ENCODE measurements at regions of chr11 and their contacts with region 1.

Region 1: GRCh38 chr11:85941380-85941973 is 86.3 kb downstream of the CCDC83 start:
- DNase-seq: no peak
- ATAC-seq: peak; percentile 79
- H3K4me3 ChIP-seq: no peak overlapping the region
- H3K27ac ChIP-seq: no peak overlapping the region
- H3K4me1 ChIP-seq: no peaks in the 10 kb centered on the region
- H3K27me3 ChIP-seq: no peaks in the 10 kb centered on the region
- CTCF ChIP-seq: peak; percentile 73

Region 2: GRCh38 chr11:85810871-85811611 is 130.4 kb before region 1 on chr11 and contains the start of gene SYTL2:
- CTCF ChIA-PET with region 1: no interaction called
- POLR2A ChIA-PET with region 1: no interaction called
- in situ Hi-C with region 1: no loop called
- intact Hi-C with region 1: no loop called
- DNase-seq: no peak
- ATAC-seq: peak; percentile 96
- H3K4me3 ChIP-seq: peak within 1 kb of the TSS; percentile 67 to 68
- H3K27ac ChIP-seq: peak within 1 kb of the TSS; percentile 87
- H3K4me1 ChIP-seq: peaks cover 37% of the 10 kb centered on the region
- H3K27me3 ChIP-seq: no peaks in the 10 kb centered on the region
- CTCF ChIP-seq: peak; percentile 39; the same call in 1 of the 2 replicates
- total RNA-seq, gene SYTL2: 132 TPM

Region 3: DNA sequence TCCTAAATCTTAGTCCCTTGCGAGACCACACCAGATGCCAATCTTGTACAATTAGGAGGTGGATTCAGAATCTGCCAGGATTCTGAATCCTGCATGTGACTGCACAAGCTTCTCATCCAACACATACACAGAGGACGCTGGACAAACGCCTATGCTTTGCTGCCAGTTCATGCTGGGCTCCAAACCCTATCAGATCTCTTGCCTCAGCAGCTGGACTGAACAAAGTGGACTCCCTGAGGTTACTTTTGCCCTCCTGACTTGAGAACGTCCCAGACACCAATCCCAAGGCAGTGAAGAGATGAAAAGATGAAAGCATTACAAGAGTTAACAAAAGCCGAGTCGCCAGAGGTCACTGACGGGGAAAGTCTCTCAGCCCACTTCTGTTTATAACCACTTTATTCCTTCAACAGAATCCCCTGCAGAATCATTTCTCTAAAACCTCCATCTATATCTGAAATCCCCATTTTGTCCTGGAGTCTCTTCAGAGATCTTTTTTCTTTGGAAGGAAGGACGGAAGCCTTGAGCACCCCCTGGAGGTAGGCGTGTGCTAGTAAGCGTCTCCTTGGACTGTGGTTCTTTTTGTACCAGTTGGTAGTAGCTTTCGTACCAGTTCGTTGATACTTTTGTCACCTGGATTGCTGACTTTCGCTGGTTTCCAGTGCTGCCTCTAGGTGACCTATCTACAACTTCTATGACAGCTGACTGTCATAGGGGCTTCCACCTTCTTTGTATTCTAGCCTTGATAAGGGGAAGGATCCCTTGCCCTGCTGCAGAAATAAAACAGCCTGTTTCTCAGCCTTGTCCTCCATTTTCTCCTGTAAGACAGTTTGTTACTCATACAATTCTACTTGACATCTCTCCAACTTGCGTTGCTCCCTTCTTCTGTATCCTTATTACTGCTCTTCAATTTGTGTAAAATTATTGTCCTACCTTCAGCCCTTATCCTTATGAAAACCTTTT is 276.9 kb after region 1 on chr11:
- CTCF ChIA-PET with region 1: interaction called, 4 read pairs
- POLR2A ChIA-PET with region 1: no interaction called
- in situ Hi-C with region 1: no loop called
- intact Hi-C with region 1: loop called (anchors 5 kb)
- DNase-seq: peak; percentile 68
- ATAC-seq: peak; percentile 92
- H3K4me3 ChIP-seq: peak overlapping the region; percentile 10 to 39
- H3K27ac ChIP-seq: peak overlapping the region; percentile 41
- H3K4me1 ChIP-seq: 0 out of 2 replicates have a peak, but pooled peaks cover 4% of the 10 kb centered on the region
- H3K27me3 ChIP-seq: peaks cover 8% of the 10 kb centered on the region; the same call in 1 of the 2 replicates
- CTCF ChIP-seq: peak; percentile 95